Activated CD8-positive, alpha-beta T cell treated with anti-CD3 and anti-CD28 coated beads for 36 hours (primary cell): ENCODE measurements at regions of chr19 and their contacts with region 1.

Region 1: DNA sequence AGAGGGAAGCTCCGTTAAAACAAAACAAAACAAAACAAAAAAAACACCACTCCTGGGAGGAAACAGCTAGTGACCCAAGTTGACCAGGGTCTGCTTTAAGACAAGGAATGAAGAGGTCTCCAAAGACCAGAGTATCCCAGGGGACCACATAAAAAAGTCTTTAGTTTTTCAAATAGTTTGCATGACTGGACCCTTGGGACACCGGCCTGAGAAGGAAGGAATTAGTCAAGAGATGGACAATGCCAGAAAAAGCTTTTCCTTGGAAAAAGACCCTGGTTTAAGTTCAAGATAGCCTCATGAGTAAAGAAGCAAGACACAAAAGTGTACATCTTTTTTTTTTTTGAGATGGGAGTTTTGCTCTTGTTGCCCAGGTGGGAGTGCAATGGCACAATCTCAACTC is 12.5 kb upstream of the PNMA8B start:
- DNase-seq: no peak
- ATAC-seq: no peak
- H3K4me3 Mint-ChIP-seq: no peak overlapping the region
- H3K27ac Mint-ChIP-seq: no peak overlapping the region
- H3K4me1 Mint-ChIP-seq: no peaks in the 10 kb centered on the region
- H3K27me3 Mint-ChIP-seq: peaks cover 17% of the 10 kb centered on the region
- CTCF ChIP-seq: no peak

Region 2: DNA sequence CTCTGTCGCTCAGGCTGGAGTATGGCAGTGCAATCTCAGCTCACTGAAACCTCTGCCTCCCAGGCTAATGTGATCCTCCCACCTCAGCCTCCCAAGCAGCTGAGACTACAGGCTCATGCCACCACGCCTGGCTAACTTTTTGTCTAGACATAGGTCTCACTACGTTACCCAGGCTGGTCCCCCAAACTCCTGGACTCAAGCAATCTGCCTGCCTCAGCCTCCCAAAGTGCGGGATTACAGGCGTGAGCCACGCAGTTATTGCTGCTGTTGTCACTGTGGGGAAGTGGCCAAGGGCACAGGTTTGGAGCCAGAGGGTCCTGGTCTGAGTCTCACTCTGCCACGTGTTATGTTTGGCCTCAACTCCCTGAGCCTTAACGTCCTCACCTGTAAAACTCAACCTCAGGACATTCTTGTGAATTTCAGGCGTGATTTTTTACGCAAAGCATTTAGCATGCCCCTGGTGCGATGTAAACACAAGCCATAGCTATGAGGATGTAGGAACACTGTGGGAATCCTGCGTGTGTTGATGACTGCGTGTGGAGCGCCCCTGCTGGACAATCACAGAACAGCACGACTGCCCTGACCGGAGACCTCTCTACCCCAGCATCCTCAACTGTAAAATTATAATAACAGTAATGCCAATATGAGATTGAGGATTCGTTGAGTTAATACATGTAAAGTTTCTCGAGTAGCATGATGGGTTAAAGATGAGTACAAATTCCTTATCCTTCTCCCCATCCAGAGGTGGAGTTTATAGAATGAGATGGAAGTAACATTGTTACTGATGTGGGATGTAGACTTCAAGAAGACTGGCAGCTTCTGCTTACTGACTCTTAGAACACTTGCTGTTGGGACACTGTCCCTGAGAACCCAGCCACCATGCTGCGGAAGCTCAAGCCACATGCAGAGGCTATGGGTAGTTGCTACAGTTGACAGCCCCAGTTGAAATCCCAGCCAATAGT is 29.2 kb after region 1 on chr19:
- CTCF ChIA-PET with region 1: interaction called, 219 read pairs
- POLR2A ChIA-PET with region 1: no interaction called
- intact Hi-C with region 1: no loop called
- DNase-seq: peak; percentile 77
- ATAC-seq: peak; percentile 83
- H3K4me3 Mint-ChIP-seq: no peak overlapping the region
- H3K27ac Mint-ChIP-seq: no peak overlapping the region
- H3K4me1 Mint-ChIP-seq: no peaks in the 10 kb centered on the region
- H3K27me3 Mint-ChIP-seq: peaks cover 1% of the 10 kb centered on the region
- CTCF ChIP-seq: peak; percentile 99

Region 3: DNA sequence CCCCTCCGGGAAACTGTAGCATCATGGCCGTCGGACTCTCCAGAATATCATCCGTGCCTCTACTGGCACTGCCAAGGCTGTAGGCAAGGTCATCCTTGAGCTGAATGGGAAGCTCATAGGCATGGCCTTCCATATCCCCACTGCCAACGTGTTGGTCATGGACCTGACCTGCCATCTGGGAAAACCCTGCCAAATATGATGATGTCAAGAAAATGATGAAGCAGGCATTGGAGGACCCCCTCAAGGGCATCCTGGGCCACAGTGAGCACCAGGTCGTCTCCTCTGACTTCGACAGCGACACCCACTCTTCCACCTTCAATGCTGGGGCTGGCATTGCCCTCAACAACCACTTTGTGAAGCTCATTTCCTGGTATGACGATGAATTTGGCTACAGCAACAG is 51.0 kb after region 1 on chr19:
- CTCF ChIA-PET with region 1: no interaction called
- POLR2A ChIA-PET with region 1: no interaction called
- intact Hi-C with region 1: no loop called
- DNase-seq: no peak
- ATAC-seq: no peak
- H3K4me3 Mint-ChIP-seq: no peak overlapping the region
- H3K27ac Mint-ChIP-seq: no peak overlapping the region
- H3K4me1 Mint-ChIP-seq: no peaks in the 10 kb centered on the region
- H3K27me3 Mint-ChIP-seq: no peaks in the 10 kb centered on the region
- CTCF ChIP-seq: no peak